ENCODE measurements at regions of chrX and their contacts with region 1.

Region 1: GRCh38 chrX:51336584-51336983 is 4.0 kb downstream of the NUDT10 start:
- DNase-seq: peak in 2 of 3 donors; percentile 12 to 36
- ATAC-seq: peak; percentile 56 to 64
- H3K4me3 ChIP-seq: no peak overlapping the region
- H3K27ac ChIP-seq: no peak overlapping the region
- H3K4me1 ChIP-seq: no peaks in the 10 kb centered on the region
- H3K27me3 ChIP-seq: no peaks in the 10 kb centered on the region

Region 2: DNA sequence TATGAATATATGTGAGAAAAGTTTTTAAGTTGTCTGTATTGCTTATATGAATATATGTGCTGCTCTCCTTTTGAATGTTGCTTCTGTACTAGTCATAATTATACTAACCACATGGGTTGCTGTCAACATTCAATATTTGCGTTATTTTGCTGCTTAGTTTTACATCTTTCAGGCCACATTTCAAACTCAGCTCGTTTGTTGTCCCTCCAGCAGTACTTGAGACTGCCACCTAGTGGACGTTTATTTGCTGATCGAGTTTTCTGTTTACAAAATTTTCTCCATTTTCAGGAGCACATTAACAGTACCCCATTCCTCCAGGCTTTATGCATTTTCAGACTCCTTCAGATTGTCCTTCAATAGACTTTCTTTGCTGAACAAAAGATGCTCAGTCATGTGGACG is 84.0 kb after region 1 on chrX:
- intact Hi-C with region 1: loop called in 2 of 4 experiments (anchors 10 kb)
- DNase-seq: no peak
- ATAC-seq: no peak
- H3K4me3 ChIP-seq: no peak overlapping the region
- H3K27ac ChIP-seq: no peak overlapping the region
- H3K4me1 ChIP-seq: no peaks in the 10 kb centered on the region
- H3K27me3 ChIP-seq: no peaks in the 10 kb centered on the region